ENCODE measurements at regions of chr2 and their contacts with region 1.

Region 1: GRCh38 chr2:102615622-102616436 is 3.5 kb upstream of the SLC9A2 start:
- DNase-seq: peak; percentile 66
- H3K27ac ChIP-seq: no peak overlapping the region
- CTCF ChIP-seq: peak; percentile 94

Region 2: DNA sequence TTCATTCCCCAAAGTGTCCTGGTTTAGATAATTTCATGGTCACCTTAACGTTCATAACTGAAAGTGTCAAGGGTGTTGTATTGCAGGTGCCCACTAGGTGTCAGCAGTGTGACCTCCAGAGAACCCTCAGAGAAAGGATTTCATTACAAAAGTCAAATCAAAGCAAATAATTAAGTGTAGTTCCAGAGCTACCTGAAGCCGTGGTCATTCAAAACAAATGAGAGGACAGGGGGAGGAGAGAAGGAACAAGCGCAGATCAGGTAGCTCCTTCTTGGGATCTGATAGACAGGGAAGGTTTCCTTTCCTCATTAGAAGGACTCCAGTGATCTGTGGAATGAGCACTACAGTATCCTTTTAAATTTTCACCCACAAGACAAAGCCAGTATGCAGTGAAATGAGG is 142.8 kb before region 1 on chr2 and contains the start of gene SLC9A4:
- CTCF ChIA-PET with region 1: interaction called, 48 read pairs
- POLR2A ChIA-PET with region 1: no interaction called
- DNase-seq: peak; percentile 32
- H3K27ac ChIP-seq: no peak within 1 kb of the TSS
- CTCF ChIP-seq: peak; percentile 90

Region 3: DNA sequence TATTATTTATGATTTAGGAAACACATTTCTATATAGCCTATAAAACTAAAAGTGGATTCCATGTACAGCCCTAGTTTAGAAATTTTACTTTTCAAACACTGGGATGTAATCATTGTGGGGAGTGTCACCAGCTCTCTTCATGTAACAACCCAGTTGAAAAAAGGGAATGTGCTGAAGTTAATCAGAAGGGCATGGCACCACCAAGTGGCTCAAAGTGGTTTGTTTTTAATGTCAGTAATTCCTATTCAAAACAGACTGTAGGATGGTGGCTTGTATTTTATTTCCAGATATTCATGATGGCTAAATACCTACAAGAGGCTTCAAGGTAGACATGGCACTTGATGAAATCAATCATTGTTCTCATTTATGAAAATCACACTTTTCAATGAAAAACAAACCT is 87.9 kb after region 1 on chr2:
- CTCF ChIA-PET with region 1: interaction called, 17 read pairs
- POLR2A ChIA-PET with region 1: no interaction called
- DNase-seq: peak; percentile 65
- H3K27ac ChIP-seq: no peak overlapping the region
- CTCF ChIP-seq: peak; percentile 20; the same call in 1 of the 2 replicates

Measured in RWPE1 (cell line).